Posterior cingulate gyrus (tissue), 11 donors: ENCODE measurements at regions of chr11 and their contacts with region 1.

Region 1: GRCh38 chr11:2314525-2315394 is 12.9 kb downstream of the TSPAN32 start:
- DNase-seq: peak; percentile 56 to 92 (median 64)

Region 2: DNA sequence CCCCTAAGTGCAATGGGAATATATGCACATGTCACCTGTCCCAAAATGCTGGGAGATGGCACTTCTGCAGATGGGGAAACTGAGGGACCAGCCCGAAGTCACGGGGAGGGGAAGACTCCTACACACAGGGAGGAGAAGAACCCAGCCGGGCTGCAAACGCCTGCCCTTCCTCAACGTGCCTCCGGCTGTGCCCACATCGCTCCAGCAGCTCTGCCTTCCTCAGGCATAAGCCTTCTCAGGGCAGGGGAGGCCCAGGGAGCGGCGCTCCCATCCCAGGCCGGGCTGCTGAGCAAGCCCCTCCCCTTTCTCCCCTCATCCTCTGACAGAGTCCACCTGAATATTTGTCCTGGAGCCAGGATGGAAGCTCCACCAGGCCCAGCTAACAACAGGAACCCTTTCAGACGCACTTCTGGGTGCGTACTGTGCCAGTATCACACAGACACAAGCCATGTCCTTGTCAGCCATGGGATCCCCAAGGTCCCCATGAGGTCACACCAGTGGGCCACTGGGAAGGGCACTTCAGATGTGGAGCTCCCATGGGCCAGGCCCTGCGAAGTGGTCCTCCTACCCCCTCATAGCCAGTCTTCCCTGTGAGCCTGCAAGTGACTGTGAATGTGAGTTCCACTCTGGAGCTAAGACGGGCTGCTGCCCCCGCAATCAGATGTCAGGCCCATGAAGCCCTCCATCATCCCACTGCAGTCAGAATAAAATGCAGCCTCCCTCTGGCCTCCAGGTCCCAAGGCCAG is 59.9 kb after region 1 on chr11:
- intact Hi-C with region 1: loop called (anchors 5 kb)
- DNase-seq: peak in 4 of 10 donors; percentile 17 to 64 (median 48)